ENCODE measurements at regions of chr15 and their contacts with region 1.

Region 1: DNA sequence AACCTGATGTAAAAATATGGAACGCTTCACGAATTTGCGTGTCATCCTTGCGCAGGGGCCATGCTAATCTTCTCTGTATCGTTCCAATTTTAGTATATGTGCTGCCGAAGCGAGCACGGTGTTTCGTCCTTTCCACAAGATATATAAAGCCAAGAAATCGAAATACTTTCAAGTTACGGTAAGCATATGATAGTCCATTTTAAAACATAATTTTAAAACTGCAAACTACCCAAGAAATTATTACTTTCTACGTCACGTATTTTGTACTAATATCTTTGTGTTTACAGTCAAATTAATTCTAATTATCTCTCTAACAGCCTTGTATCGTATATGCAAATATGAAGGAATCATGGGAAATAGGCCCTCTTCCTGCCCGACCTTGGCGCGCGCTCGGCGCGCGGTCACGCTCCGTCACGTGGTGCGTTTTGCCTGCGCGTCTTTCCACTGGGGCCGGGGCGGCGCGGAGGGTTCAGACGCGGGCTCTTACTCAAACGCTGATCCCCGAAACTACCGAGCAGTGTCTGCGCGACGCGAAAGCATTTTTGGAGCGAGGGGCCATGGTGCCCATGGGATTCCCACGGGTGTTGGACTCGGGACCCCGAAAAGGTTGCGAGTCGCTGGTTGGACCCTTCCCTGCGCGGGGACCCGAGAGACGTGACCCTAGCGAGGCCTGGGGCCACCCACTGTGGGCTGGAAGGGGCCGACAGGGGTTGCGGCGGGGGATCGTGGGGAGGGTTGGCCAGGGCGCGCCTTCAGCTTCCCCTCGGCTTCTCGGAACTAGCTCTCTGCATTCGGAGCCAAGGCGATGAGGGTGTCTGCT is at the start of gene RNU6-1:
- DNase-seq: peak; percentile 95 to 97
- ATAC-seq: peak; percentile 93 to 95 (median 94)
- H3K4me3 ChIP-seq: peak within 1 kb of the TSS; percentile 83
- H3K27ac ChIP-seq: peak within 1 kb of the TSS; percentile 94
- H3K4me1 ChIP-seq: peaks cover 14% of the 10 kb centered on the region
- H3K27me3 ChIP-seq: peaks cover 0 to 7% (median 0%) of the 10 kb centered on the region in 3 donors
- CTCF ChIP-seq: no peak
- total RNA-seq, gene RNU6-1: not detected

Region 2: GRCh38 chr15:67456677-67457529 is 383.2 kb before region 1 on chr15:
- intact Hi-C with region 1: loop called (anchors 1 to 10 kb)
- DNase-seq: peak; percentile 82 to 87
- ATAC-seq: peak; percentile 71 to 89 (median 86)
- H3K4me3 ChIP-seq: no peak overlapping the region
- H3K27ac ChIP-seq: no peak overlapping the region
- H3K4me1 ChIP-seq: no peaks in the 10 kb centered on the region
- H3K27me3 ChIP-seq: no peaks in the 10 kb centered on the region
- CTCF ChIP-seq: peak; percentile 75

Region 3: GRCh38 chr15:67501177-67501835 is 338.8 kb before region 1 on chr15:
- intact Hi-C with region 1: loop called (anchors 2 to 10 kb)
- DNase-seq: no peak
- ATAC-seq: peak in 1 of 4 donors; percentile 67
- H3K4me3 ChIP-seq: no peak overlapping the region
- H3K27ac ChIP-seq: no peak overlapping the region
- H3K4me1 ChIP-seq: no peaks in the 10 kb centered on the region
- H3K27me3 ChIP-seq: no peaks in the 10 kb centered on the region
- CTCF ChIP-seq: peak; percentile 35

Region 4: GRCh38 chr15:67914537-67915460 is 74.7 kb after region 1 on chr15:
- intact Hi-C with region 1: no loop called
- DNase-seq: peak; percentile 39 to 75
- ATAC-seq: peak; percentile 49 to 69 (median 68)
- H3K4me3 ChIP-seq: no peak overlapping the region
- H3K27ac ChIP-seq: peak overlapping the region; percentile 74
- H3K4me1 ChIP-seq: peaks cover 19% of the 10 kb centered on the region
- H3K27me3 ChIP-seq: no peaks in the 10 kb centered on the region
- CTCF ChIP-seq: no peak